B cell (primary cell): ENCODE measurements at regions of chr3 and their contacts with region 1.

Region 1: GRCh38 chr3:122679085-122679881 is 1.4 kb upstream of the PARP14 start:
- DNase-seq: peak; percentile 87
- ATAC-seq: peak; percentile 38
- H3K4me3 ChIP-seq: peak overlapping the region; percentile 50 to 96 (median 84)
- H3K4me3 Mint-ChIP-seq: peak overlapping the region; percentile 90
- H3K27ac ChIP-seq: peak overlapping the region; percentile 97 to 98
- H3K27ac Mint-ChIP-seq: peak overlapping the region; percentile 92
- H3K4me1 ChIP-seq: peaks cover 48 to 59% of the 10 kb centered on the region in 2 donors
- H3K4me1 Mint-ChIP-seq: peaks cover 61% of the 10 kb centered on the region
- H3K27me3 ChIP-seq: no peaks in the 10 kb centered on the region
- H3K27me3 Mint-ChIP-seq: no peaks in the 10 kb centered on the region
- CTCF ChIP-seq: peak; percentile 77

Region 2: DNA sequence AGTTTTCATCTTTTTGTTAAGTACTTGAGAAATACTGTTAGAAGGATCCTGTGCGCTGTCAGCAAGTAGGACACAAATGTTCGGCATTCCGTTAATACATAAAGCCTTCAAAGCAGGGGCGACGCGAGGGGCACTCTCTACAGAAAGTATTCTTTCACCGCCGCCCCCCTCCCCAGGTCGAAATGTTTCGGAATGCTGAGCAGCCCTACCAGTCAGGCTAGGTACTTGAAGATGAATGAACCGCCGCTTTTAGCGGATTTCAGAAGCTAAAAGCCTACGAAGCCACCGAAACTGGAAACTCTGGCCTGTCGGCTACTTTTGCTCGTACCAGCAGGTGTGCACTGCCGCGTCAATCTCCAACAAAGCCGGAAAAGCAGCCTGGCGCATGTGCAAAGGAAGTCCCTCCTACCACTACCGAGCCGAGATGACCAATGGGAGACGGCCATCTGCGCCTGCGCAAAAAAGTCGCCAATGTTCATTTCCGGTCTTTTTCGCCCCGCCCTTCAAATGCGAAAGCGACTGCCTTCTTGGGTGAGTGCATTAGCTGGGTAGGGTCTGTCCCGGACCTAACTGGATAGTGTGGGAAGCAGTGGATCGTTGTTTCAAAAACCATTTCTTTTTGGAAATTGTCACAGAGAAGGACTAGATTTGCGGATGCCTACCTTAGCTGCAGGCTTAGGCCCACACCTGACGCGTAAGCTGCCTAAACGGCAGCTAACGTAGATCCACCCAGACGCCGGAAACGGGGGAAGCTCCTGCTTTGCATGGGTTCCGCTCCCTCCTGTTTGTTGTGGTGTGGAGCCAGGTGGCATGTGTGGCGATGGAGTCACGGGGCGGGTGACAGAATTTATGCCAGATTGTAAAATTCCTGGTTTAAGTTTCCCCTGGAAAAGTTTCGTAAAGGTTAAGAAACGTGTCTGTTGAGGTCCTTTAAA is 263.3 kb before region 1 on chr3 and contains the start of gene WDR5B:
- CTCF ChIA-PET with region 1: interaction called, 3 read pairs
- POLR2A ChIA-PET with region 1: interaction called, 3 read pairs
- intact Hi-C with region 1: loop called (anchors 1 kb)
- DNase-seq: peak; percentile 100
- ATAC-seq: peak; percentile 88
- H3K4me3 ChIP-seq: peak within 1 kb of the TSS; percentile 74 to 98 (median 83)
- H3K4me3 Mint-ChIP-seq: peak within 1 kb of the TSS; percentile 100
- H3K27ac ChIP-seq: peak within 1 kb of the TSS; percentile 87 to 97
- H3K27ac Mint-ChIP-seq: peak within 1 kb of the TSS; percentile 100
- H3K4me1 ChIP-seq: peaks cover 20 to 26% of the 10 kb centered on the region in 2 donors
- H3K4me1 Mint-ChIP-seq: peaks cover 55% of the 10 kb centered on the region
- H3K27me3 ChIP-seq: no peaks in the 10 kb centered on the region
- H3K27me3 Mint-ChIP-seq: no peaks in the 10 kb centered on the region
- CTCF ChIP-seq: no peak
- total RNA-seq, gene WDR5B: 11.6 and 12.3 TPM in 2 replicates

Region 3: DNA sequence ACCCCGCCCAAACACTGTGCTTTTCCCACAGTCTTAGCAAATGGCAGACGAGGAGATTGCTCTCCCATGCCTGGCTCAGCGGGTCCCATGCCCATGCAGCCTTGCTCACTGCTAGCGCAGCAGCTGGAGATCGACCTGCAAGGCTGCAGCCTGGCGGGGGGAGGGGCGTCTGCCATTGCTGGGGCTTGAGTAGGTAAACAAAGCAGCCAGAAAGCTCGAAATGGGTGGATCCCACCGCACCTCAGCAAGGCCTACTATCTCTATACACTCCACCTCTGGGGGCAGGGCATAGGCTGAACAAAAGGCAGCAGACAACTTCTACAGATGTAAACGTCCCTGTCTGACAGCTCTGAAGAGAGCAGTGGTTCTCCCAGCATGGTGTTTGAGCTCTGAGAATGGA is 236.2 kb before region 1 on chr3:
- CTCF ChIA-PET with region 1: no interaction called
- POLR2A ChIA-PET with region 1: no interaction called
- intact Hi-C with region 1: no loop called
- DNase-seq: no peak
- ATAC-seq: no peak
- H3K4me3 ChIP-seq: no peak overlapping the region
- H3K4me3 Mint-ChIP-seq: no peak overlapping the region
- H3K27ac ChIP-seq: no peak overlapping the region
- H3K27ac Mint-ChIP-seq: no peak overlapping the region
- H3K4me1 ChIP-seq: no peaks in the 10 kb centered on the region
- H3K4me1 Mint-ChIP-seq: peaks cover 10% of the 10 kb centered on the region
- H3K27me3 ChIP-seq: no peaks in the 10 kb centered on the region
- H3K27me3 Mint-ChIP-seq: no peaks in the 10 kb centered on the region
- CTCF ChIP-seq: no peak

Region 4: DNA sequence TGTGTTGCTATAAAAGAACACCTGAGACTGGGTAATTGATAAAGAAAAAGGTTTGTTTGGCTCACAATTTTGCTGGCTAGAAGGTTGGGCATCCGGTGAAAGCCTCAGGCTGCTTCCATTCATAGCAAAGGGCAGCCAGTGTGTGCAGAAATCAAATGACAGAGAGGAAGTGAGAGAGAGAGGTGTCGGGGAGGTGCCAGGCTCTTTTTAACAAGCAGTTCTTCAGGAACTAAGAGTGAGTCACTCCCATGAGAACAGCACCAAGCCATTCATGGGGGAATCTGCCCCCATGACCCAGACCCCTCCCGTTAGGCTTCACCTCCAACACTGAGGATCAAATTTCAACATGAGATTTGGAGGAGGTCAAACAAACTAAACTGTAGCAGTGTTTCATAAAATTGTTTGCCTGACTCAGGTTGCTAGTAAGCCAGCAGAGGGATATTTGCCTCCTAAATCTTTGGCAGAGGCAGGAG is 106.3 kb before region 1 on chr3:
- CTCF ChIA-PET with region 1: interaction called, 293 read pairs
- POLR2A ChIA-PET with region 1: interaction called, 15 read pairs
- intact Hi-C with region 1: loop called (anchors 1 kb)
- DNase-seq: peak; percentile 73
- ATAC-seq: peak; percentile 22
- H3K4me3 ChIP-seq: no peak overlapping the region
- H3K4me3 Mint-ChIP-seq: peak overlapping the region; percentile 20
- H3K27ac ChIP-seq: peak overlapping the region; percentile 66 to 78
- H3K27ac Mint-ChIP-seq: peak overlapping the region; percentile 93
- H3K4me1 ChIP-seq: peaks cover 65 to 73% of the 10 kb centered on the region in 2 donors
- H3K4me1 Mint-ChIP-seq: peaks cover 75% of the 10 kb centered on the region
- H3K27me3 ChIP-seq: no peaks in the 10 kb centered on the region
- H3K27me3 Mint-ChIP-seq: no peaks in the 10 kb centered on the region
- CTCF ChIP-seq: no peak

Region 5: GRCh38 chr3:122668930-122669730 is 10.2 kb before region 1 on chr3:
- CTCF ChIA-PET with region 1: interaction called, 13 read pairs
- POLR2A ChIA-PET with region 1: no interaction called
- intact Hi-C with region 1: no loop called
- DNase-seq: no peak
- ATAC-seq: no peak
- H3K4me3 ChIP-seq: no peak overlapping the region
- H3K4me3 Mint-ChIP-seq: no peak overlapping the region
- H3K27ac ChIP-seq: no peak overlapping the region
- H3K27ac Mint-ChIP-seq: no peak overlapping the region
- H3K4me1 ChIP-seq: no peaks in the 10 kb centered on the region
- H3K4me1 Mint-ChIP-seq: peaks cover under 1% of the 10 kb centered on the region
- H3K27me3 ChIP-seq: no peaks in the 10 kb centered on the region
- H3K27me3 Mint-ChIP-seq: no peaks in the 10 kb centered on the region
- CTCF ChIP-seq: no peak

Region 6: GRCh38 chr3:122754929-122755328 is 75.6 kb after region 1 on chr3:
- CTCF ChIA-PET with region 1: interaction called, 14 read pairs
- POLR2A ChIA-PET with region 1: no interaction called
- intact Hi-C with region 1: no loop called
- DNase-seq: peak; percentile 69
- ATAC-seq: peak; percentile 76
- H3K4me3 ChIP-seq: no peak overlapping the region
- H3K4me3 Mint-ChIP-seq: no peak overlapping the region
- H3K27ac ChIP-seq: no peak overlapping the region
- H3K27ac Mint-ChIP-seq: no peak overlapping the region
- H3K4me1 ChIP-seq: no peaks in the 10 kb centered on the region
- H3K4me1 Mint-ChIP-seq: no peaks in the 10 kb centered on the region
- H3K27me3 ChIP-seq: no peaks in the 10 kb centered on the region
- H3K27me3 Mint-ChIP-seq: no peaks in the 10 kb centered on the region
- CTCF ChIP-seq: peak; percentile 76